ENCODE measurements at regions of chr5 and their contacts with region 1.

Region 1: GRCh38 chr5:57559110-57559635 is 76.6 kb upstream of the ACTBL2 start:
- DNase-seq: no peak
- H3K4me3 Mint-ChIP-seq: no peak overlapping the region
- H3K27ac Mint-ChIP-seq: no peak overlapping the region
- H3K4me1 Mint-ChIP-seq: no peaks in the 10 kb centered on the region
- H3K27me3 Mint-ChIP-seq: no peaks in the 10 kb centered on the region
- CTCF ChIP-seq: no peak

Region 2: GRCh38 chr5:57598756-57599155 is 39.6 kb after region 1 on chr5:
- CTCF ChIA-PET with region 1: no interaction called
- intact Hi-C with region 1: no loop called
- DNase-seq: peak; percentile 4
- H3K4me3 Mint-ChIP-seq: no peak overlapping the region
- H3K27ac Mint-ChIP-seq: peak overlapping the region; percentile 0
- H3K4me1 Mint-ChIP-seq: peaks cover 9% of the 10 kb centered on the region
- H3K27me3 Mint-ChIP-seq: no peaks in the 10 kb centered on the region
- CTCF ChIP-seq: no peak

Region 3: GRCh38 chr5:58327289-58327688 is 768.1 kb after region 1 on chr5:
- CTCF ChIA-PET with region 1: no interaction called
- intact Hi-C with region 1: loop called (anchors 5 kb)
- DNase-seq: no peak
- H3K4me3 Mint-ChIP-seq: no peak overlapping the region
- H3K27ac Mint-ChIP-seq: no peak overlapping the region
- H3K4me1 Mint-ChIP-seq: no peaks in the 10 kb centered on the region
- H3K27me3 Mint-ChIP-seq: no peaks in the 10 kb centered on the region
- CTCF ChIP-seq: no peak

Measured in Calu3 (cell line).